GM12878 (cell line): ENCODE measurements at regions of chr15 and their contacts with region 1.

Region 1: GRCh38 chr15:57146506-57147201 is 228.2 kb downstream of the TCF12 start:
- DNase-seq: no peak
- ATAC-seq: peak; percentile 64; the same call in 2 of the 3 replicates
- H3K4me3 ChIP-seq: no peak overlapping the region
- H3K27ac ChIP-seq: no peak overlapping the region; the same call in 1 of the 2 replicates
- H3K4me1 ChIP-seq: peaks cover 15% of the 10 kb centered on the region
- H3K27me3 ChIP-seq: no peaks in the 10 kb centered on the region
- CTCF ChIP-seq: peak; percentile 42 to 70 (median 59); a peak in 5 of 6 replicates
- EP300 ChIP-seq: no peak
- POLR2A ChIP-seq: no peak
- RAD21 ChIP-seq: peak; percentile 77

Region 2: DNA sequence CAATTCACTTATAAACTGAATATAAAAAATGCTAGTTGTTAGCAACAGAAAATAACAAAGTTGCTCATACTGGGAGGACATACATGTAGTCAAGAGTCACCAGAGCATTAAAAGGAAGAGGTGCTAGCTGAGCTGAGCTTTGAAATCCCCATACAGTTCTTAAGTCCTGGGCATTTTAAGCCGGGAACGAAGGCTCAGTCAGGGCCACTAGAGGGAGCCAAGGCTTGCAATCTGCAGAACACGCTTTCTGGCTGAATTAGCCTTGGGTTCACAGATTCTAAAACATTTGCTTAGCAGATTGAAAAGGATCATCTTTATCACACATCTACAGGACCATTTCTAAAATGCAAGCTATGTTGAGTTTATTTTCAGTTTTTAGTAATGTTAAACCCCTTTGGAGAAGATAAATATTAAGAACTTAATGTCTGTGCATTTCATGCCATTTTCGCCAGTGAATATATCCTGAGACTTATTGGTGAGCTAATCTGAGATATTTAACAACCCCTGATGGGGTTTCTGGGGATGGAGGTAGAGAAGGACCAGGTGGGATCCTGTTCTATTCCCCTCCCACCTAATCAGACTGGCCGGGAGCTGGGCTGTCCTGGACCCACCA is 655.4 kb before region 1 on chr15:
- CTCF ChIA-PET with region 1: interaction called, 6 read pairs
- POLR2A ChIA-PET with region 1: no interaction called
- RAD21 ChIA-PET with region 1: interaction called, 6 read pairs
- SMC1A ChIA-PET with region 1: interaction called, 3 read pairs
- in situ Hi-C with region 1: no loop called
- intact Hi-C with region 1: loop called (anchors 10 kb)
- DNase-seq: peak; percentile 28
- ATAC-seq: peak; percentile 94
- H3K4me3 ChIP-seq: no peak overlapping the region
- H3K27ac ChIP-seq: no peak overlapping the region
- H3K4me1 ChIP-seq: no peaks in the 10 kb centered on the region
- H3K27me3 ChIP-seq: no peaks in the 10 kb centered on the region
- CTCF ChIP-seq: peak; percentile 89 to 94 (median 92)
- EP300 ChIP-seq: no peak
- POLR2A ChIP-seq: no peak
- RAD21 ChIP-seq: peak; percentile 86

Region 3: GRCh38 chr15:57017024-57017423 is 129.6 kb before region 1 on chr15:
- CTCF ChIA-PET with region 1: interaction called, 11 read pairs
- POLR2A ChIA-PET with region 1: no interaction called
- RAD21 ChIA-PET with region 1: interaction called, 4 read pairs
- SMC1A ChIA-PET with region 1: interaction called, 4 read pairs
- in situ Hi-C with region 1: no loop called
- intact Hi-C with region 1: no loop called
- DNase-seq: no peak
- ATAC-seq: peak; percentile 67
- H3K4me3 ChIP-seq: no peak overlapping the region
- H3K27ac ChIP-seq: no peak overlapping the region
- H3K4me1 ChIP-seq: no peaks in the 10 kb centered on the region
- H3K27me3 ChIP-seq: no peaks in the 10 kb centered on the region
- CTCF ChIP-seq: peak in 2 of 3 experiments; percentile 32 to 36; a peak in 2 of 6 replicates
- EP300 ChIP-seq: no peak
- POLR2A ChIP-seq: no peak
- RAD21 ChIP-seq: peak; percentile 65

Region 4: GRCh38 chr15:57054204-57054750 is 92.4 kb before region 1 on chr15:
- CTCF ChIA-PET with region 1: no interaction called
- POLR2A ChIA-PET with region 1: no interaction called
- RAD21 ChIA-PET with region 1: no interaction called
- SMC1A ChIA-PET with region 1: no interaction called
- in situ Hi-C with region 1: no loop called
- intact Hi-C with region 1: no loop called
- DNase-seq: no peak
- ATAC-seq: no peak
- H3K4me3 ChIP-seq: no peak overlapping the region
- H3K27ac ChIP-seq: no peak overlapping the region
- H3K4me1 ChIP-seq: peaks cover 17% of the 10 kb centered on the region
- H3K27me3 ChIP-seq: no peaks in the 10 kb centered on the region
- CTCF ChIP-seq: no peak
- EP300 ChIP-seq: no peak
- POLR2A ChIP-seq: no peak
- RAD21 ChIP-seq: no peak

Region 5: GRCh38 chr15:57165992-57166391 is 19.3 kb after region 1 on chr15:
- CTCF ChIA-PET with region 1: interaction called, 12 read pairs
- POLR2A ChIA-PET with region 1: interaction called, 3 read pairs
- RAD21 ChIA-PET with region 1: interaction called, 7 read pairs
- SMC1A ChIA-PET with region 1: interaction called, 46 read pairs
- in situ Hi-C with region 1: no loop called
- intact Hi-C with region 1: no loop called
- DNase-seq: no peak
- ATAC-seq: no peak
- H3K4me3 ChIP-seq: no peak overlapping the region
- H3K27ac ChIP-seq: no peak overlapping the region
- H3K4me1 ChIP-seq: no peaks in the 10 kb centered on the region
- H3K27me3 ChIP-seq: no peaks in the 10 kb centered on the region
- CTCF ChIP-seq: no peak
- EP300 ChIP-seq: no peak
- POLR2A ChIP-seq: no peak
- RAD21 ChIP-seq: no peak

Region 6: DNA sequence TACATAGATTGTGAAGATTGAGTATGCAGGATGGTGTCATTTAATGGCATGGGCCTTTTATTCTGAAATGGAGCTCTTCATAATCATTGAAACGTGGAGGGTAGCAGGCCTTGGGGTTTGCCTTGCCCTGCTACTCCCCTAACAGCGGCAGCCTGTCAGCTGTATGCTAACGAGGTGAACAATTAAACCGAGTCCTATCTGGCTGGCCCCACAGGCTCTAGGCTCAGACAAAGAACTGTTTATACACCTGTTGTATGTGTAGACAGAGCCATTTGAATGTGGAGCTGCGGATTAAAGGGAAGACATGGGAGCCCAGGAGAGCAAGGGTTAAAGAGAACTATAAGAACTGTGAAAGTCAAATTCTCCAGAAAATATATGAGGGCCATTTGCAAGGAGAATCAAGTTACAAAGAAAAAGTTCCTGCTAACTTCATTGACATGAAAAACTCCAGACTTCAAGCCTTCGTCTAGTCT is 113.0 kb after region 1 on chr15:
- CTCF ChIA-PET with region 1: interaction called, 6 read pairs
- POLR2A ChIA-PET with region 1: no interaction called
- RAD21 ChIA-PET with region 1: interaction called, 12 read pairs
- SMC1A ChIA-PET with region 1: interaction called, 9 read pairs
- in situ Hi-C with region 1: no loop called
- intact Hi-C with region 1: no loop called
- DNase-seq: peak; percentile 13
- ATAC-seq: peak; percentile 94
- H3K4me3 ChIP-seq: no peak overlapping the region
- H3K27ac ChIP-seq: no peak overlapping the region
- H3K4me1 ChIP-seq: no peaks in the 10 kb centered on the region
- H3K27me3 ChIP-seq: no peaks in the 10 kb centered on the region
- CTCF ChIP-seq: no peak
- EP300 ChIP-seq: peak in 1 of 2 experiments; percentile 20; a peak in 1 of 4 replicates
- POLR2A ChIP-seq: no peak
- RAD21 ChIP-seq: no peak

Region 7: DNA sequence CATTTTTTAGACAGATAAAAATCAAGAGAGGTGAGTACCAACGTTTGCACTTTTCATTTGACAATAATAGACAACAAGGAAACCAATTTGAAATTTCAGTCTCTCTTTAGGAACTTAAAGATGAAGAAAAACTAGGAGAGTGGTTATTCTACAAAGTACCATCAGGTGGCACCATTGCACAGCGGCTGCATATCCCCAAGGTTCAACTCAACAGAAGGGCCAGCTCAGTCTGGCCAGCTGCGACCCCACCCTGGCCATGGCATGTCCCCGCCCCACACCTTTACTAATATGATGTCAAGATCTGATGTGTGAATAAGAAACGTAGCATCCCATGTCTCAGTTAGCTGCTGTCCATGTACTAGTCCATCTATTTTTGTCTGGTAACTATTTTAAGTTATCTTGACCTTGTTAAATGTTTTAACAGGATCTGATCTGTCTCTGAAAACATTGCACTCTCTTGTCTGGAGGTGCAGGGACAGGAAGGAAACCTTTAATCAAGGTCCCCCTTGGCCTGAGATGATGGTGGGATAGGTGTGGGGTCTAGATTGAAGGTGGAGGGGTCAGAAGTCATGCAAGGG is 194.1 kb after region 1 on chr15:
- CTCF ChIA-PET with region 1: interaction called, 16 read pairs
- POLR2A ChIA-PET with region 1: no interaction called
- RAD21 ChIA-PET with region 1: interaction called, 11 read pairs
- SMC1A ChIA-PET with region 1: interaction called, 6 read pairs
- in situ Hi-C with region 1: no loop called
- intact Hi-C with region 1: no loop called
- DNase-seq: peak; percentile 15
- ATAC-seq: peak; percentile 84
- H3K4me3 ChIP-seq: no peak overlapping the region
- H3K27ac ChIP-seq: no peak overlapping the region
- H3K4me1 ChIP-seq: no peaks in the 10 kb centered on the region
- H3K27me3 ChIP-seq: peaks cover 0 to 2% of the 10 kb centered on the region in 2 experiments; a peak in 2 of 4 replicates
- CTCF ChIP-seq: peak; percentile 71 to 88 (median 75)
- EP300 ChIP-seq: no peak
- POLR2A ChIP-seq: no peak
- RAD21 ChIP-seq: peak; percentile 91

Region 8: GRCh38 chr15:57541805-57542504 is 395.3 kb after region 1 on chr15:
- CTCF ChIA-PET with region 1: interaction called, 24 read pairs
- POLR2A ChIA-PET with region 1: no interaction called
- RAD21 ChIA-PET with region 1: interaction called, 5 read pairs
- SMC1A ChIA-PET with region 1: interaction called, 4 read pairs
- in situ Hi-C with region 1: no loop called
- intact Hi-C with region 1: loop called (anchors 5 kb)
- DNase-seq: no peak
- ATAC-seq: peak; percentile 63
- H3K4me3 ChIP-seq: no peak overlapping the region
- H3K27ac ChIP-seq: no peak overlapping the region
- H3K4me1 ChIP-seq: peaks cover 12% of the 10 kb centered on the region
- H3K27me3 ChIP-seq: peaks cover 0 to 1% of the 10 kb centered on the region in 2 experiments; a peak in 2 of 4 replicates
- CTCF ChIP-seq: peak; percentile 72 to 86 (median 83)
- EP300 ChIP-seq: no peak
- POLR2A ChIP-seq: no peak
- RAD21 ChIP-seq: peak; percentile 39